ENCODE measurements at regions of chr2 and their contacts with region 1.

Region 1: DNA sequence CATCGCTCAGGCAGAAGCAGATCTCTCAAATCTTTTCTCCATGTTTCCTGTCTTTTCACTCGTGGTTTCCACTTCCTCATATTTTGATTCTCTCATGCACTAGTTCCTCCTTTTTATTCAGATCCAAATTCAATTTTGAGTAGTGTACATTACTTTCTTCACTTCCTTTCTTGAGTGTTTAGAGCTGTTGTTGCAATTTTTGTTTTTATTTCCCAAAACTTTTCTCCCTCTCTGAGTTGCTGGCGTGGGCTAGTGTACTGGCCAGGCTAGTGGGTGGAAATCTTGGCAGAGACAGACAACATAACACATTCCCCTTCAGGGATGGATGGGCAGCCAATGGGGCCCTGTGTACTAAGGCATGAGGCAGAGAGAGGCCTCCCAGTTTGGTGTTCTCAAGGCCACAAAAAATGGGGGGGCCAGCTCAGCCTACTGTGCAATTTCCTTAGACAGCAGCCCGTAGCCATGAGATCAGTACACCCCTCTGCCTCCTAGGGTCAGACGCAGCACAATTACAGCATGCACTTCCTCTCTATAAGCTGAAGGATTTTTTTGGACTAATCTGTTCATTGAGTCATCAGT is 145.1 kb upstream of the PID1 start:
- DNase-seq: no peak
- H3K4me3 ChIP-seq: no peak overlapping the region
- H3K27ac ChIP-seq: no peak overlapping the region
- H3K4me1 ChIP-seq: no peaks in the 10 kb centered on the region
- H3K27me3 ChIP-seq: no peaks in the 10 kb centered on the region
- CTCF ChIP-seq: no peak
- POLR2A ChIP-seq: no peak

Region 2: DNA sequence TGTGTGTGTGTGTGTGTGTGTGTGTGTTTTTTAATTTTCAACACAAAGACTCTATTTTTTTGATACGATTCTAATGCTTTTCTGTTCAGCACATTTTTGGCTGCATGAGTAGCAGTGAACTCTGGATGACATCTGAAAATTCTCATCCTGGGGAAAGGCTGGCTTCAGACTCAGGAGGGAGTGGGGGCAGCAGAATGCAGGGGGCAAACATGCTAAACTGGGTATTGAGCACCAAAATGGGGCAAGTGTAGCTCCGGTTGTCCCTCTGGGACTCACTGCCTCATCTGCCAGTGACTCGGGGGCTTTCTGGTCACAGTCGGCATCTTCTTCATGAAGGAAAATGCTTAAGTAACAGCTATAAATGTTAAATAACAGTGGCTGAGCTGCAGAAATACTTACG is 28.3 kb before region 1 on chr2:
- CTCF ChIA-PET with region 1: no interaction called
- POLR2A ChIA-PET with region 1: no interaction called
- dilution Hi-C with region 1: no loop called
- intact Hi-C with region 1: loop called (anchors 1 kb)
- DNase-seq: no peak
- H3K4me3 ChIP-seq: no peak overlapping the region
- H3K27ac ChIP-seq: no peak overlapping the region
- H3K4me1 ChIP-seq: no peaks in the 10 kb centered on the region
- H3K27me3 ChIP-seq: no peaks in the 10 kb centered on the region
- CTCF ChIP-seq: no peak
- POLR2A ChIP-seq: no peak